ENCODE measurements at regions of chr12 and their contacts with region 1.

Region 1: GRCh38 chr12:63170321-63170720 is 19.3 kb upstream of the AVPR1A start:
- DNase-seq: no peak
- ATAC-seq: no peak
- H3K4me3 Mint-ChIP-seq: no peak overlapping the region
- H3K27ac Mint-ChIP-seq: no peak overlapping the region
- H3K4me1 Mint-ChIP-seq: no peaks in the 10 kb centered on the region
- H3K27me3 Mint-ChIP-seq: peaks cover 2% of the 10 kb centered on the region

Region 2: DNA sequence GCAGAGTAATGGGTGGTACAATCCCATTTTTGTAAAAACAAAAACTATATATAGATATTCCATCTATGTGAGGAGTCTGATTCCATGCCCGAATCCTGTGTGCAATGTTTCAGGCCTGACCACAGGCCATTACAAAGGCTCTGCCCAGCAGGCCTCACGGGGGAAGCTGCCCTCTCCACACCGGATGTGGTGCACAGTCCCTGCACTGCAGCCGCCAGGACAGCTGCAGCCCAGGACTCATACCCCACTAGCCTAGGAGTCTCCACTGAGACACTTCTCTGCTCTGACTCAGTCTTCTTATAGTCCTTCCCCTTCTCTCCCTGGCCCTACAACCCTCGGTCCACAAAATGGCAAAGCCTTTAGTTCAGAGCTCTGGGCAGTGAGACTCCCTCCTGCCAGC is 425.8 kb before region 1 on chr12:
- CTCF ChIA-PET with region 1: no interaction called
- POLR2A ChIA-PET with region 1: no interaction called
- intact Hi-C with region 1: no loop called
- DNase-seq: no peak
- ATAC-seq: no peak
- H3K4me3 Mint-ChIP-seq: no peak overlapping the region
- H3K27ac Mint-ChIP-seq: no peak overlapping the region
- H3K4me1 Mint-ChIP-seq: peaks cover 2% of the 10 kb centered on the region
- H3K27me3 Mint-ChIP-seq: no peaks in the 10 kb centered on the region

Region 3: DNA sequence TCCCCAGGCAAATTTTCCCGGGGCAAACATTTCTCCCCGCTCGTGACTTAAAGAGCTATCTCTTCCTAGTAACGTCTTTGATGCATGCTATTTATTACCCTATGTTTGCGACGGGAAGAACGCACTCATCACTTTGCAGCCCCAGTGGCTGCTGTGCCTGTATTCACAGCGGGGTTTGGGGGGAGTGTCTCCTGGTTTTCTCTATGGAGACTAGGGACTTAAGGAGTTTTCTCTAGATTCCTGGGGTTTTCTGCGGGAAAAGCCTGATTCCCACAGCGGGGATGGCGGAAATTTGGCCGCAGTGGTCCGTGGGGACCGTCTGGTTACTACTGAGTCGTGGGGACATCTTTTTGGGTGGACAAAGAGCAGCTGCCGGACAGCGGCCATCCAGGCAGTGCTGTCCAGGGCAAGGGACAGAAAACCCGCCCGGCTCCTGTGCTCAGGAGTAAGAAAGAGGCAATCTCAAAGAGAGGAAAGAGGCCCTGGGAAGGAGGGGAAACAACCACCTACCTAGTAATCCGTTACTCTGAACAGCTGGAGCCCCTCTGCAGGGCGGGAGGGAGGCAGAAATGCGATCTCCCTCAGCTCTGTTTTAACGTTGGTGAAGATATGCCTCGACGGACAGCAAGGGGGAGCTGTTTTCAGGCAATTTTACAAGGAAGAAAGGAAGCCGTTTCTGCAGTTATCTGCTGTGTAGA is 18.5 kb before region 1 on chr12:
- CTCF ChIA-PET with region 1: interaction called, 11 read pairs
- POLR2A ChIA-PET with region 1: no interaction called
- intact Hi-C with region 1: no loop called
- DNase-seq: peak; percentile 52
- ATAC-seq: peak; percentile 65
- H3K4me3 Mint-ChIP-seq: peak overlapping the region; percentile 12
- H3K27ac Mint-ChIP-seq: no peak overlapping the region
- H3K4me1 Mint-ChIP-seq: peaks cover 19% of the 10 kb centered on the region
- H3K27me3 Mint-ChIP-seq: peaks cover 53% of the 10 kb centered on the region